ENCODE measurements at regions of chr22 and their contacts with region 1.

Region 1: DNA sequence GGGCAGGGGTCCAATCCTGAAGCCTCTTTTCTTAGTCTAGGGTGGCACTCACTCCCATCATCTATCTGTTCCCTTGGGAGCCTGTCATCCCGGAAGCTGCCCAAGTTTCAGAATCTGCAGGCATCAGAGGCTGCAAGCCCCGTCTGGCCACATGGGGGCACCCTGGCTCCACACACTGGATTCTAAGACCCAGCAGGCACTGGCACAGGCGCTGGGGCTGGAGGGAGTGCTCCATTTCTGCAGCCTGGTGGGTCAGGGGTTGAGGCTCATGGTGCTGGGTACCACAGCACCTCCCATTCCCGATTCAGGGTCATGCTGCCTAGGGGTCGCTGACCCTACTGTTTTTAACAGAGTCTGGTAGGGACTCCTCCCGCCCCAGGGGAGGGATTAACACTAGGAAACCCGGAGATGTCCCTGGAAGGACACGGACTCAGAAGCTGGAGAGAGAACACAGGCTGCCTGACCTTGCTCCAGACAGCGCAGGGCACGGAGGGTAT is 243.9 kb upstream of the SYN3 start:
- DNase-seq: peak; percentile 91
- ATAC-seq: peak; percentile 94

Region 2: DNA sequence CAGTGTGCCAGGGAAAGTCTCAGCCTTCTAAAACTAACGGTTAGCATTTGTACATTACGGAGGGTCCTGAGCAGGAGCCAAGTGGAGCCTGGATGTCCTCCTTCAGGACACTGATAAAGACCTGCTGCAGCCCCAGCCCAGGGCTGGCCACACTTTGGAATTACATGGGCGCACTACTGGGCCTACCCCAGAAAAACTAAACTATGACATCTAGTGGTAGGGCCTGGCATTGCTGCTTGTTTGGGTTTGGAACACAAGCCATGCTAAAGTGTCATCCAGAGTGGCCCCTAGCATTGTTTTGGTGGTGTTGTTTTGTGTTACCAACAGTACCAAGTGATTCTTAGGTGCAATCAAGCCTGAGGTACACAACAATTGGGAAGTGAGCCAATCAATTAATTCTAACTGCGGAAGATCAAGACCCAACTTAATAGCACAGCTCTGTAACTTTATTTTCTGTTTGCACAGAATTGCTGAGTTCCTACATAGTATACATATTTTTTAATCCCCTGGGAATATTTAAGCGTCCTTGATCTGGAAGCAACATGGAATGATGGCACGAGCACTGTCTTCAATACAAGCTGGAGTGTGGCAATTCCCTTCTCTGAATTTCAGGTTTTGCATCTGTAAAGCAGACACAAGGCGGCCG is 277.5 kb after region 1 on chr22:
- intact Hi-C with region 1: loop called (anchors 10 kb)
- DNase-seq: peak; percentile 75
- ATAC-seq: peak; percentile 90